Activated CD4-positive, alpha-beta T cell treated with anti-CD3 and anti-CD28 coated beads, Interleukin-2, amount 10 ng/mL, durations not matched to agents 24 days and 14 days (primary cell): ENCODE measurements at regions of chr15 and their contacts with region 1.

Region 1: GRCh38 chr15:64093627-64094417 is at the start of gene CIAO2A:
- DNase-seq: peak; percentile 98
- H3K4me3 Mint-ChIP-seq: peak within 1 kb of the TSS; percentile 98
- H3K27ac Mint-ChIP-seq: peak within 1 kb of the TSS; percentile 94
- H3K4me1 Mint-ChIP-seq: peaks cover 57% of the 10 kb centered on the region
- H3K27me3 Mint-ChIP-seq: no peaks in the 10 kb centered on the region
- total RNA-seq, gene CIAO2A: 72.3 and 73.0 TPM in 2 replicates

Region 2: GRCh38 chr15:63600616-63601025 is 493.2 kb before region 1 on chr15:
- intact Hi-C with region 1: loop called (anchors 5 kb)
- DNase-seq: peak; percentile 97
- H3K4me3 Mint-ChIP-seq: peak overlapping the region; percentile 93
- H3K27ac Mint-ChIP-seq: peak overlapping the region; percentile 91
- H3K4me1 Mint-ChIP-seq: peaks cover 49% of the 10 kb centered on the region
- H3K27me3 Mint-ChIP-seq: no peaks in the 10 kb centered on the region

Region 3: DNA sequence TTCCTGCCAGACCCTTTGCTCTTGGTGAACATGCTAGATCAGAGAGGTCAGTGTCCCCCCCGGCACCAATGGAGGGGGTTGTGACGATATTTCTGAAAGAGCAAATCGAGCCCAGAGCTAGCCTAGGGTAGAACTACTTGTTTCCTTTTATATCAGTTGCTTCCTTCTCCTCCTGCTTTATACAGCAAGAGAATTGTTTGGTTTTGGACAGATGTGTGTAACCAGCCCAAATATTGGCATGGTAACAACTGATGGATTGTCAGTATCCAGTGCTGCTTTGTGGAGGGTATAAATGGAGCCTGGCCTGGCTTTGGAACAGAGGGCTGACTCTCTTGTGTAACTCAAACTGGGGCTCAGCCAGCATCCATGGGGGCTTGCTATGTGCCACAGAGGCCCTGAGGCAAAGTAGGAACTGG is 29.1 kb after region 1 on chr15:
- intact Hi-C with region 1: no loop called
- DNase-seq: no peak
- H3K4me3 Mint-ChIP-seq: no peak overlapping the region
- H3K27ac Mint-ChIP-seq: no peak overlapping the region
- H3K4me1 Mint-ChIP-seq: peaks cover 3% of the 10 kb centered on the region
- H3K27me3 Mint-ChIP-seq: no peaks in the 10 kb centered on the region

Region 4: DNA sequence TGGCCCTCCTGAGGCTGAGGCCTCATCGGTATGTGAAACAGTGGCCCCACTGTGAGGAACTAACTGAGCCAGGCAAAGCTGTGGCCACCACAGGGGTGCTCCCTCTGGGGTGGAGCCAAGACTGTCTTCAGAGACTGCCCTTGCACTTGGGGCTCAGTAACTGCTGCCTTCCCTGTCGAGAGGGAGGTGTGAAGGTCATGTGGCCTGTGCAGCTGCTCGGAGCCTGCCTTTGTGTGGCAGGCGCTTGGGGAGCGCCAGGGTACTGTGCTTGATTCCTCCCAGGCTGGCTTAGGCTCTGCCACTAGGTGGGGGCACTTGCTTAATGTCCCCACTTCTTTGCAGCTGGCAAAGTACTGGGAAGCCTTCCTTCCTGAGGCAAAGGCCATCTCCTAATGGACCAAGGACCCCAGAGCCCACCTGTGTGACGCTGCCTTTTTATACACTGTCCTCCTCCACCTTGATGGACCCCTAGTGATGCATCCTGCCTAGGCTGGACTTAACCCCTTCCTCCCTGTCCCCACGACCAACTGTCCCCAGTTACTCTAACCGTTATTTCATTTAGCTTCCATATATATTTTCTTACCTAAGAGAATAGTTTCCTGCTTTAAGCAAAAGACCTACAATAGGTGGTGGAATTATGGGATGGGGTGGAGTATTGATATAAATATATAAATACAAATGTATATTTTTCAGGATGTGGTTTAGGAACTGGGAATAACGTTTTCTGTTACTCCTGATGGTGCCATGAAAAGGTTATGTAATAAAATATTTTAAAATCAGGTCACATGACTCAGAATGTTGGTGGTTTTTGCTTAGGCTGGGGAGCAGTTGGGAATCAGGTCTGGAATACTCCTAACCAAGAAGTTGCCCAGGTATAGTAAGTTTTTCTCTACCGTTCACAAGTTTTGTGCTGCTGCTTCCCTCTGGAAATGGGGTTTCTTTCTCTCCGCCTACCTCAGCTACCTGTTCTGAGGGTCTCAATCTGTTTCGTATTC is 43.7 kb after region 1 on chr15:
- intact Hi-C with region 1: no loop called
- DNase-seq: no peak
- H3K4me3 Mint-ChIP-seq: no peak overlapping the region
- H3K27ac Mint-ChIP-seq: no peak overlapping the region
- H3K4me1 Mint-ChIP-seq: no peaks in the 10 kb centered on the region
- H3K27me3 Mint-ChIP-seq: no peaks in the 10 kb centered on the region

Region 5: DNA sequence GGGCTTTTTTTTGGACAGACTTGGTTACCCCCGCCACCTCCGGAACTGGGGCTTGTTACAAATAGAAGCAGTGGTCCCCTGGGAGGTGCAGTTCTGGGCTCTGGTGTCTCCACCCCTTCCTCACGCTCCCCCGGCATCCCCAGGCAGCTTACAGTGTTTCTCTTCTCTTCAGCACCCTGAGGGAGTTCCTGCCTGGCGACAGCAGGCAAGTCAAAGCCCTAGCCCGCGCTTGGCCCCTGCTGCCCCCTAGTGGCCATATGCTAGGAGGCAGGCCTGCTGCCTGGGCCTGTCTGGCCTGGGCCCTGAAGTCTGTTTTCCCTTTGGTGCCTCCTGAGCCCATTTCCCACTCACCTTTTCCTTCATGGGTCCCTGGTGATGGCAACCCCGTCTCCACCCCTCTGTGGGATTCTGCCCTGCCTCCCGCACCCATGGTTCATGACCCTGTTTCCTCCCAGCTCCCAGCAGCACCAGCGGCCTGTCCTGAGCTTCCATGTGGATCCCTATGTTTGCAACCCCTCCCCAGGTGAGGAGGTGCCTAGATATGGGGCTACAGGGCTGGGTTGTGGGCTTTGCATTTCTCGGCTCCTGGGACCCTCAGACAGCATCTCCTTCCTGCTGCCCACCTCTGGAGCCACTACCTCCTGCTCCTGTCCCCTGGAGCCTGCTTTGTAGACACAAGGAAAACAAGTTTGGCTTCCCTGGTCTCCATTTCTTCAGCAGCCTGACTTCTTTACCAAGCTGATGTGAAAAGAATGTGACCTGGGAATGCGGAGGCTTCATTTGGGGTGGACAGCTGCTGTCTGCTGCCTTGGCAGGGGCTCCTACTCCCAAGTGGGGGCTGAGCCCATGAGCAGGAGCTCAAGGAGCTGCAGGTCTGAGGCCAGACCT is 59.9 kb after region 1 on chr15:
- intact Hi-C with region 1: loop called (anchors 1 kb)
- DNase-seq: peak; percentile 98
- H3K4me3 Mint-ChIP-seq: peak overlapping the region; percentile 30
- H3K27ac Mint-ChIP-seq: peak overlapping the region; percentile 21
- H3K4me1 Mint-ChIP-seq: peaks cover 30% of the 10 kb centered on the region
- H3K27me3 Mint-ChIP-seq: peaks cover 5% of the 10 kb centered on the region

Region 6: GRCh38 chr15:64387562-64388168 is 293.8 kb after region 1 on chr15 and contains the start of gene TRIP4:
- intact Hi-C with region 1: loop called (anchors 10 kb)
- DNase-seq: peak; percentile 99
- H3K4me3 Mint-ChIP-seq: peak within 1 kb of the TSS; percentile 97
- H3K27ac Mint-ChIP-seq: peak within 1 kb of the TSS; percentile 93
- H3K4me1 Mint-ChIP-seq: peaks cover 13% of the 10 kb centered on the region
- H3K27me3 Mint-ChIP-seq: no peaks in the 10 kb centered on the region
- total RNA-seq, gene TRIP4: 21.1 and 23.9 TPM in 2 replicates

Region 7: GRCh38 chr15:65292938-65293518 is 1199.2 kb after region 1 on chr15:
- intact Hi-C with region 1: loop called (anchors 10 kb)
- DNase-seq: no peak
- H3K4me3 Mint-ChIP-seq: no peak overlapping the region
- H3K27ac Mint-ChIP-seq: no peak overlapping the region
- H3K4me1 Mint-ChIP-seq: peaks cover 26% of the 10 kb centered on the region
- H3K27me3 Mint-ChIP-seq: no peaks in the 10 kb centered on the region